HCT116 (cell line): ENCODE measurements at regions of chr7 and their contacts with region 1.

Region 1: GRCh38 chr7:17298207-17298839 is at the start of gene AHR:
- DNase-seq: peak; percentile 88
- ATAC-seq: peak; percentile 84
- H3K4me3 ChIP-seq: peak within 1 kb of the TSS; percentile 67
- H3K27ac ChIP-seq: peak within 1 kb of the TSS; percentile 92
- H3K4me1 ChIP-seq: peaks cover 5 to 24% of the 10 kb centered on the region in 2 experiments; a peak in 3 of 4 replicates
- H3K27me3 ChIP-seq: no peaks in the 10 kb centered on the region
- CTCF ChIP-seq: no peak
- POLR2A ChIP-seq: peak; percentile 77
- RAD21 ChIP-seq: 0 out of 2 replicates have a peak, but pooled peaks have one; percentile 6
- total RNA-seq, gene AHR: 29.7 TPM

Region 2: GRCh38 chr7:16114633-16115032 is 1183.7 kb before region 1 on chr7:
- CTCF ChIA-PET with region 1: no interaction called
- POLR2A ChIA-PET with region 1: no interaction called
- RAD21 ChIA-PET with region 1: no interaction called
- intact Hi-C with region 1: loop called (anchors 10 kb)
- DNase-seq: peak; percentile 52
- ATAC-seq: peak; percentile 59; the same call in 1 of the 2 replicates
- H3K4me3 ChIP-seq: no peak overlapping the region
- H3K27ac ChIP-seq: no peak overlapping the region
- H3K4me1 ChIP-seq: no peaks in the 10 kb centered on the region
- H3K27me3 ChIP-seq: no peaks in the 10 kb centered on the region
- CTCF ChIP-seq: peak; percentile 24 to 54 (median 54); a peak in 4 of 6 replicates
- POLR2A ChIP-seq: no peak
- RAD21 ChIP-seq: peak; percentile 88

Region 3: GRCh38 chr7:16962986-16963520 is 335.3 kb before region 1 on chr7:
- CTCF ChIA-PET with region 1: no interaction called
- POLR2A ChIA-PET with region 1: interaction called, 10 read pairs
- RAD21 ChIA-PET with region 1: no interaction called
- intact Hi-C with region 1: no loop called
- DNase-seq: no peak
- ATAC-seq: no peak
- H3K4me3 ChIP-seq: no peak overlapping the region
- H3K27ac ChIP-seq: no peak overlapping the region
- H3K4me1 ChIP-seq: no peaks in the 10 kb centered on the region; a peak in 1 of 4 replicates
- H3K27me3 ChIP-seq: no peaks in the 10 kb centered on the region
- CTCF ChIP-seq: no peak
- POLR2A ChIP-seq: no peak
- RAD21 ChIP-seq: no peak

Region 4: GRCh38 chr7:16982640-16983350 is 315.5 kb before region 1 on chr7:
- CTCF ChIA-PET with region 1: interaction called, 16 read pairs
- POLR2A ChIA-PET with region 1: interaction called, 3 read pairs
- RAD21 ChIA-PET with region 1: no interaction called
- intact Hi-C with region 1: loop called (anchors 2 kb)
- DNase-seq: peak; percentile 35
- ATAC-seq: no peak; the same call in 1 of the 2 replicates
- H3K4me3 ChIP-seq: no peak overlapping the region
- H3K27ac ChIP-seq: no peak overlapping the region
- H3K4me1 ChIP-seq: peaks cover 3 to 6% of the 10 kb centered on the region in 2 experiments; a peak in 1 of 4 replicates
- H3K27me3 ChIP-seq: no peaks in the 10 kb centered on the region
- CTCF ChIP-seq: peak; percentile 79 to 98 (median 93)
- POLR2A ChIP-seq: no peak
- RAD21 ChIP-seq: peak; percentile 90

Region 5: GRCh38 chr7:17234398-17235031 is 63.8 kb before region 1 on chr7:
- CTCF ChIA-PET with region 1: no interaction called
- POLR2A ChIA-PET with region 1: no interaction called
- RAD21 ChIA-PET with region 1: no interaction called
- intact Hi-C with region 1: no loop called
- DNase-seq: peak; percentile 77
- ATAC-seq: peak; percentile 89
- H3K4me3 ChIP-seq: peak overlapping the region in 1 of 2 experiments; percentile 29; a peak in 2 of 4 replicates
- H3K27ac ChIP-seq: peak overlapping the region; percentile 39
- H3K4me1 ChIP-seq: peaks cover 15 to 23% of the 10 kb centered on the region in 2 experiments
- H3K27me3 ChIP-seq: no peaks in the 10 kb centered on the region
- CTCF ChIP-seq: no peak
- POLR2A ChIP-seq: no peak
- RAD21 ChIP-seq: peak; percentile 37; the same call in 1 of the 2 replicates

Region 6: GRCh38 chr7:17530741-17531417 is 232.6 kb after region 1 on chr7:
- CTCF ChIA-PET with region 1: no interaction called
- POLR2A ChIA-PET with region 1: no interaction called
- RAD21 ChIA-PET with region 1: no interaction called
- intact Hi-C with region 1: loop called (anchors 5 kb)
- DNase-seq: peak; percentile 26
- ATAC-seq: peak; percentile 83
- H3K4me3 ChIP-seq: no peak overlapping the region
- H3K27ac ChIP-seq: no peak overlapping the region
- H3K4me1 ChIP-seq: peaks cover 0 to 13% of the 10 kb centered on the region in 2 experiments; a peak in 1 of 4 replicates
- H3K27me3 ChIP-seq: no peaks in the 10 kb centered on the region
- CTCF ChIP-seq: peak; percentile 37 to 56 (median 49); a peak in 5 of 6 replicates
- POLR2A ChIP-seq: no peak
- RAD21 ChIP-seq: peak; percentile 77

Region 7: DNA sequence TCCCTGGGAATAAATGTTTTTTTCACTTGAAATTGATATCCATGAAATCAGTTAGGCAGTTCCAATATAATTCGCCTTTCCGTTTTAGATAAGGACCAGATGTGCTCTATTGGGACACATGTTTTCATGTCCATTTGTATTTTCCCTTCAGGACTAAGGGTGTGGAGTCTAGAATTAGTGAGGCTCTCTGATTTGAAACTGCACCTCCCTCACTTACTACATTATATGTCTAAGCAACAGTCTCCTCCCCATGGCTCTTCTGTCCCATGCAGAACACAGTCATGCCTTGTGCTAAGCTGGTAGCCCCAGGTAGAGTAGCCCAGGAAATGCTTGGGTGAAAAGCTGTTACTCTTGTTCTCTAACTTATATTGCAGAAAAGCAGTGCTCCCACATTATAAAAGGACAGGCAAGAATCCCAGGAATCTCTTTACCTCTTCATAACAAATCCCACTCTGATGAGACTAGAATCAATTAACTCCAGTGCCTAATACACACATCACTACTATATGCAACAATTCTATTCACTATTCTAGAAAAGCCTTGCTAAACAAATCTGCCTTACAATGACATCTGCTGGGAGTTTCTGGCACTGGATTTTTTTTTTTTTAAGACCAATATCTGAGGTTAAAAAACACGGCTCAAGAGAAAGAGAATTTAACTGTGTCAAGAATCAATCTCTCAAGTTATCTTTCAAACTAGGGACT is 348.1 kb after region 1 on chr7:
- CTCF ChIA-PET with region 1: no interaction called
- POLR2A ChIA-PET with region 1: no interaction called
- RAD21 ChIA-PET with region 1: no interaction called
- intact Hi-C with region 1: loop called (anchors 5 kb)
- DNase-seq: no peak
- ATAC-seq: peak; percentile 47; the same call in 1 of the 2 replicates
- H3K4me3 ChIP-seq: no peak overlapping the region
- H3K27ac ChIP-seq: no peak overlapping the region
- H3K4me1 ChIP-seq: no peaks in the 10 kb centered on the region
- H3K27me3 ChIP-seq: no peaks in the 10 kb centered on the region
- CTCF ChIP-seq: peak in 2 of 3 experiments; percentile 33 to 44; a peak in 2 of 6 replicates
- POLR2A ChIP-seq: no peak
- RAD21 ChIP-seq: peak; percentile 67